Right ventricle myocardium inferior (tissue), 1 donor: ENCODE measurements at regions of chr22 and their contacts with region 1.

Region 1: DNA sequence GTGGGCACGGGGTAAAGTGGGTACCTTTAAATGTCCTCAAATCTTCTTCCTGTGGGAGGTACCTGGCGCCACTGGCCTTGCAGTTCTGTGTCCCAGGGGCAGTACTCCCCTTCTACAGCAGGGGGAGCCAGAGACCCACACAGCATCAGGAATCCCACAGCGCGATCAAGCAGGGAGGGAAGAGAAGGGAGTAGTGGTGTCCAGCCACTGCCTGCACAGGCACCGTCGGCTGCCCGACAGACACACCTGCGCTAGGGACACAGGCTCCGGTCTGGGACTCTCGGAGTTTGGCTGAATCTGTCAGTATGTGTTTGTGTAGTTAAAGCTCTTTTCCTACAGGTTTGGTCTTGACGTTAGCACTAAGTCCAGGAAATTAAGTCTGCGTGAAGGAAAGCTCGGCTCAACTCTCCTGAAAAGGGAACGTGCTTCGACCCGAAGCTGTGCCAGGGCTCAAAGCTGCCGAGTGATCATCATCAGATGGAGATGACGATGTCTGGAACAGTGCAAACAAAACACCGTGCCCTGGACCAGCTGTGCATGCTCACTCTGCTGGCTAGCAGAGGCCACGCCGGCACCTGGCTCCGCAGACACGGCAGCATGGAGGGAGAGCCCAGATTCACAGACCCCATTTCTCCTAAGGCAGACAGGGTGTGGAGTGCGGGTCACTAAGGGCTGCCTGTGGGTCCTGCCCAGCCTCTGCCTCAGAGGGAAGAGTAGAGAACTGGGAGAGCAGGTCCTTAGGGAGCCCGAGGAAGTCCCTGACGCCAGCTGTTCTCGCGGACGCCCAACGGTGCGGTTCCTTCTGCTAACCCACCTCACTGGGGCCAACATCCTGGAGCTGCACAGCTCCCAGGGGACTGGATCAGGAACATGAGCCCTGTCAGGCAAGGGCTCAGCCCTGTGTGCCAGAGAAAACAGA is 56.0 kb upstream of the BID start:
- DNase-seq: peak; percentile 89
- ATAC-seq: peak; percentile 79

Region 2: GRCh38 chr22:18024276-18024947 is 194.1 kb after region 1 on chr22 and contains the start of gene MICAL3:
- intact Hi-C with region 1: loop called (anchors 1 kb)
- DNase-seq: no peak
- ATAC-seq: peak; percentile 84
- total RNA-seq, gene MICAL3: 85.7 TPM